GM12878 (cell line): ENCODE measurements at regions of chr3 and their contacts with region 1.

Region 1: DNA sequence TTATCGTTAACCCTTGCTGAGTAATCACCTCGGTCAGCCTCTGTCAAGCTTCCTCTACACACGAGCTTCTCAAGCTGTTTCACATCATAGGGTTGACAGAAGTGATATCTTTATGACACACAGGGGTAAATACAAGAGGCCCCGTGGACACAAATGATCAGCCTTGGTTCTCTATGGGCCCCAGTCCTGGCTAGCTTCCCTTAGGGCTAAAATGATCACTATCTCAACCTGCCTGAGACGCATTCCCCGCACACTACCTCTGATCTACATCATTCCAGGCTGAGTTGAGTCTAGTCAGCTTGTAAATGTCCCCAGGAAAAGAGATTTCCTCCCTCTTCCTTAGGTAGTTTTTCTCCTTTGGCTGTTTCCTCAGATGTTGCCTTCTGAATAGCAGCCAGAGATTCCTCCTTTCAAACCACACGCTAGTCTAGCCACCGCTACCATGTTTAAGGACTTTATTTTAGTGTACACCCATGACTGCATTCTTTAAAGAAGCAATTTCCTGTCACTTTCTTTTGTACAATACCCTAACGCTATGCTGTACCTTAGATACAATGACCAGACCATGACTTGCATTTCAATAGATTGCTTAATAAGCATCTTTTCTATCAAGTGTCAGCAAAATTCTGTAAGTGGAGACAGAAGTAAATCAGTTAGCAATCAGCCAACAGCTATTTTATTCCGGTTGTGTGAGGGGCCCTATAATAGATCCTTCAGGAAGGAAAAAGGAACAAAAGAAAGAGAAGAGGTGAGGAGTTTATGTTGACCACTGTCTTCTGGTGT is 35.1 kb upstream of the PPARG start:
- DNase-seq: no peak
- ATAC-seq: peak; percentile 57
- H3K4me3 ChIP-seq: no peak overlapping the region
- H3K27ac ChIP-seq: no peak overlapping the region
- H3K4me1 ChIP-seq: no peaks in the 10 kb centered on the region
- H3K27me3 ChIP-seq: no peaks in the 10 kb centered on the region
- CTCF ChIP-seq: no peak
- EP300 ChIP-seq: no peak
- POLR2A ChIP-seq: no peak
- RAD21 ChIP-seq: no peak

Region 2: DNA sequence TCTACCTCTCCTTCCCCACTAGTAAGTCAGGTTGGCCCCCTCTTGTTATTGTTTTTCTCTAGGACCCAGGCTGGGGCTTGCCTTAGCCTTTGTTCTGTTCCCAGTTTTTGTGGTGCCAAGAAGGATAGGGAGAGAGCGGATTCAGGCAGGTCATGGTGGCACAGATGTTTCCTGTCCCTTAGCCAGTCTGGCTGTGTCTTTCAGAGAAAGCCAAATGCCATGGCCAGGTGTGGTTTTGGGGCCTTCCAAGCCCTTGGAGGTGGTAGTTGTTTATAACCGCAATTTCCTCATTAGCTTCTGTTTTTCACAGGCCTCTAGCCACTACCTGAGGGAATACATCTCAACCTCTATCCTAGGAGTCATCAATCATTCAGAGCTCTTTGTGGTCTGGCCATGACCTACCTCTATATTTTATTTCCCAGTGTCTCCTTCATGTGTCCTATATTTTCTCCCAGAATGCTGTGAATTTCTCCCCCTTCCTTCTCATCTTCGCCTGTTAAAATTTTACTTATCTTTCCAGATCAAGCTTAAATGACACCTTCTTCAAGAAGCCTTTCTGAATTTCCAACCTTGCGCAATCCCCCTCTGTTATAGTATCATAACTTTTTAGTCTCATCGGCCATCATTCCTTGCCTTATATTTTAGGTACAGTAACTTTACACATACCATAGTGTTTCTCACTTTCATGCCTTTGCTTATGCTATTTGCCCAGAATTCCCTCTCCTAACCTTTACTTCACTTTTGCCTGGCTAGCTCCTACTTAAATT is 133.2 kb before region 1 on chr3:
- CTCF ChIA-PET with region 1: no interaction called
- POLR2A ChIA-PET with region 1: no interaction called
- RAD21 ChIA-PET with region 1: no interaction called
- SMC1A ChIA-PET with region 1: no interaction called
- in situ Hi-C with region 1: no loop called
- intact Hi-C with region 1: no loop called
- DNase-seq: no peak
- ATAC-seq: peak; percentile 14; the same call in 2 of the 3 replicates
- H3K4me3 ChIP-seq: no peak overlapping the region
- H3K27ac ChIP-seq: no peak overlapping the region
- H3K4me1 ChIP-seq: no peaks in the 10 kb centered on the region
- H3K27me3 ChIP-seq: 0 out of 4 replicates have a peak, but pooled peaks cover 0 to 6% of the 10 kb centered on the region in 2 experiments
- CTCF ChIP-seq: no peak
- EP300 ChIP-seq: no peak
- POLR2A ChIP-seq: no peak
- RAD21 ChIP-seq: no peak

Region 3: GRCh38 chr3:12222757-12223495 is 30.8 kb before region 1 on chr3:
- CTCF ChIA-PET with region 1: no interaction called
- POLR2A ChIA-PET with region 1: no interaction called
- RAD21 ChIA-PET with region 1: no interaction called
- SMC1A ChIA-PET with region 1: no interaction called
- in situ Hi-C with region 1: no loop called
- intact Hi-C with region 1: no loop called
- DNase-seq: no peak
- ATAC-seq: no peak
- H3K4me3 ChIP-seq: no peak overlapping the region
- H3K27ac ChIP-seq: no peak overlapping the region
- H3K4me1 ChIP-seq: no peaks in the 10 kb centered on the region
- H3K27me3 ChIP-seq: no peaks in the 10 kb centered on the region
- CTCF ChIP-seq: no peak
- EP300 ChIP-seq: no peak
- POLR2A ChIP-seq: no peak
- RAD21 ChIP-seq: no peak

Region 4: DNA sequence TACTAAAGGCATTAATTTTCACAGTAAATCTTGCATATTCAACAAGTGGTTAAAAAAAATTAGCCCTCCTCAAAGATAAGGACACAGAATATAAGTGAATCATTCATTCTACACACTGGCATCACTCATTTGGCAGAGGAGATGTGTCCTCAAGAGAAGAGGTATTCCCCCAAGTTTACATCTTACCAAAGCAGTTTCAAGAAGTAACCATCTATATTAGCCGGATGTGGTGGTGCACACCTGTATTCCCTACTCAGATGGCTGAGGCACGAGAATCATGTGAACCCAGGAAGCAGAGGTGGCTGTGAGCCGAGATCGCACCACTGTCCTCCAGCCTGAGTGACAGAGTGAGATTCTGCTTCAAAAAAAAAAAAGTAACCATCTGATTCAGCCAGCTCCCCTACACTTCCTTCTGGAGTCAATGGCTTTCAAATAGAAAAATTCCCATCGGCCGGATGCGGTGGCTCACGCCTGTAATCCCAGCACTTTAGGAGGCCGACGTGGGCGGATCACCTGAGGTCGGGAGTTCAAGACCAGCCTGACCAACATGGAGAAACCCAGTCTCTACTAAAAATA is 394.7 kb after region 1 on chr3:
- CTCF ChIA-PET with region 1: no interaction called
- POLR2A ChIA-PET with region 1: interaction called, 10 read pairs
- RAD21 ChIA-PET with region 1: no interaction called
- SMC1A ChIA-PET with region 1: no interaction called
- in situ Hi-C with region 1: no loop called
- intact Hi-C with region 1: no loop called
- DNase-seq: peak; percentile 85
- ATAC-seq: peak; percentile 82
- H3K4me3 ChIP-seq: peak overlapping the region; percentile 59
- H3K27ac ChIP-seq: peak overlapping the region; percentile 88
- H3K4me1 ChIP-seq: peaks cover 26% of the 10 kb centered on the region
- H3K27me3 ChIP-seq: no peaks in the 10 kb centered on the region
- CTCF ChIP-seq: no peak
- EP300 ChIP-seq: peak in 1 of 2 experiments; percentile 57; a peak in 1 of 4 replicates
- POLR2A ChIP-seq: no peak
- RAD21 ChIP-seq: no peak